ENCODE measurements at regions of chr1 and their contacts with region 1.

Region 1: GRCh38 chr1:156927215-156928042 is 7.0 kb downstream of the LRRC71 start:
- DNase-seq: peak; percentile 91
- H3K4me3 Mint-ChIP-seq: peak overlapping the region; percentile 41
- H3K27ac Mint-ChIP-seq: no peak overlapping the region
- H3K4me1 Mint-ChIP-seq: peaks cover 33% of the 10 kb centered on the region
- H3K27me3 Mint-ChIP-seq: peaks cover 58% of the 10 kb centered on the region
- CTCF ChIP-seq: peak; percentile 97

Region 2: GRCh38 chr1:156821801-156822200 is 105.6 kb before region 1 on chr1:
- CTCF ChIA-PET with region 1: interaction called, 13 read pairs
- POLR2A ChIA-PET with region 1: no interaction called
- intact Hi-C with region 1: no loop called
- DNase-seq: peak; percentile 41
- H3K4me3 Mint-ChIP-seq: no peak overlapping the region
- H3K27ac Mint-ChIP-seq: no peak overlapping the region
- H3K4me1 Mint-ChIP-seq: peaks cover 18% of the 10 kb centered on the region
- H3K27me3 Mint-ChIP-seq: no peaks in the 10 kb centered on the region
- CTCF ChIP-seq: no peak

Region 3: GRCh38 chr1:156884560-156885184 is 42.8 kb before region 1 on chr1:
- CTCF ChIA-PET with region 1: interaction called, 363 read pairs
- POLR2A ChIA-PET with region 1: interaction called, 28 read pairs
- intact Hi-C with region 1: no loop called
- DNase-seq: no peak
- H3K4me3 Mint-ChIP-seq: no peak overlapping the region
- H3K27ac Mint-ChIP-seq: no peak overlapping the region
- H3K4me1 Mint-ChIP-seq: no peaks in the 10 kb centered on the region
- H3K27me3 Mint-ChIP-seq: peaks cover 74% of the 10 kb centered on the region
- CTCF ChIP-seq: no peak

Region 4: GRCh38 chr1:157073944-157074767 is 146.7 kb after region 1 on chr1:
- CTCF ChIA-PET with region 1: interaction called, 3 read pairs
- POLR2A ChIA-PET with region 1: no interaction called
- intact Hi-C with region 1: loop called (anchors 10 kb)
- DNase-seq: peak; percentile 81
- H3K4me3 Mint-ChIP-seq: no peak overlapping the region
- H3K27ac Mint-ChIP-seq: no peak overlapping the region
- H3K4me1 Mint-ChIP-seq: no peaks in the 10 kb centered on the region
- H3K27me3 Mint-ChIP-seq: no peaks in the 10 kb centered on the region
- CTCF ChIP-seq: peak; percentile 60